Vagina (tissue), 2 donors: ENCODE measurements at regions of chr3 and their contacts with region 1.

Region 1: DNA sequence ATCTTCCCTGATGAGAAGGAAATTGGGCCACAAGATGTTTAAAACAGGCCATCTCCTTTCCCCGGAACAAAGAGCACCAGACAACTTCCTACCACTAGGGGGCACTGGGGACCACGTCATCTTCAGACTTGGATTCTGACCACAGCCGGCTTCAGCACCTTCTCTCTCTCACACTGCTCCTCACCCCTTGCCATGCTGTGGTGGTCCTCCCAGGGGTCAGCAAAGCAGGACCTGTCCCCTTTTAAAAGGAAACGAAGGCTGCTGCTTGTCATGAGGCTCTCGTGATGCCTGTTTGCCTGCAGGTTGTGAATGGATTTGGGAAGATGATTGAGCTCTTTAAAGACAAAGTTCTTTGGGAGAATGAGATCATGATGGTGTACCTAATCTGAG is 16.2 kb downstream of the RFT1 start:
- DNase-seq: no peak
- H3K4me3 ChIP-seq: no peak overlapping the region
- H3K27ac ChIP-seq: peak overlapping the region; percentile 20
- H3K4me1 ChIP-seq: peaks cover 16% of the 10 kb centered on the region
- H3K27me3 ChIP-seq: no peaks in the 10 kb centered on the region
- CTCF ChIP-seq: peak; percentile 76 to 90 (median 83)
- POLR2A ChIP-seq: no peak

Region 2: GRCh38 chr3:53195602-53196574 is 81.9 kb after region 1 on chr3:
- intact Hi-C with region 1: loop called (anchors 2 kb)
- DNase-seq: no peak
- H3K4me3 ChIP-seq: no peak overlapping the region
- H3K27ac ChIP-seq: no peak overlapping the region
- H3K4me1 ChIP-seq: peaks cover 23% of the 10 kb centered on the region
- H3K27me3 ChIP-seq: no peaks in the 10 kb centered on the region
- CTCF ChIP-seq: peak; percentile 92 to 99 (median 95)
- POLR2A ChIP-seq: no peak

Region 3: GRCh38 chr3:53375019-53375418 is 261.0 kb after region 1 on chr3:
- intact Hi-C with region 1: no loop called
- DNase-seq: no peak
- H3K4me3 ChIP-seq: no peak overlapping the region
- H3K27ac ChIP-seq: no peak overlapping the region
- H3K4me1 ChIP-seq: no peaks in the 10 kb centered on the region
- H3K27me3 ChIP-seq: no peaks in the 10 kb centered on the region
- CTCF ChIP-seq: peak in 2 of 3 experiments; percentile 31 to 38
- POLR2A ChIP-seq: no peak